ENCODE measurements at regions of chr10 and their contacts with region 1.

Region 1: GRCh38 chr10:31723106-31723750 is 205.4 kb downstream of the ARHGAP12 start:
- DNase-seq: no peak
- ATAC-seq: no peak
- H3K4me3 ChIP-seq: no peak overlapping the region
- H3K4me3 Mint-ChIP-seq: no peak overlapping the region
- H3K27ac ChIP-seq: no peak overlapping the region
- H3K27ac Mint-ChIP-seq: no peak overlapping the region
- H3K4me1 ChIP-seq: no peaks in the 10 kb centered on the region
- H3K4me1 Mint-ChIP-seq: no peaks in the 10 kb centered on the region
- H3K27me3 ChIP-seq: peaks cover 0 to 6% of the 10 kb centered on the region in 2 experiments
- H3K27me3 Mint-ChIP-seq: peaks cover 5 to 11% of the 10 kb centered on the region in 2 donors

Region 2: DNA sequence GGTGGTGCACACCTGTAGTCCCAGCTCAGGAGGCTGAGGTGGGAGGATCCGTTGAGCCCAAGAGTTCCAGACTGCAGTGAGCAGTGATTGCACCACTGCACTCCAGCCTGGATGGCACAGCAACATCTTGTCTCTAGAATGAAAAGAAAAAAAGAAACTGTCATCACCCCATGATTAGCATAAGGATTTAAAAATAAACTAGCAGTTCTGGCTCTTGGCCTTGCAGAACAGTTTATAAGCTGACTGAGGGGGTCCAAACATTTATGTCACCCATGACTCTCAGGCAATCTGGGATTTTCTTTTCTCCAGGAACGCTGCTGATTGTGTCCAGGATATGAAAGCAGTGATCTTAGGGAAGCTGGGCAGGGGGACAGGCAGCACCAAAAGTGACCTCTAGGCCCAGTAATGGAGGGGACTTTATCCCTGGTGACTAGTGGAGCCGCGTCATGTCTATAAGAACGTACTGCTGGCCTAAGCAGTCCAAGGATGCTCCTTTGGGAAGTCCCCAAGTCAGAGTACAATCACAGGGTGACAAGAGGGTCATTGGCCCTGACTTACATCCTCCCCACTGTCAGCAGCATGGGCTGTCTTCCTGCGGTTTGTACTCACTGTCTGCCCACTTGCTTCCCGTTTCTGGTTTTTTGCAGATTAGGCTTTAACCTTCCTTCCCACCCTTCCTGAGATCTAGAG is 28.0 kb after region 1 on chr10:
- CTCF ChIA-PET with region 1: no interaction called
- POLR2A ChIA-PET with region 1: interaction called in 1 of 2 experiments, 11 read pairs
- DNase-seq: peak in 1 of 35 experiments; percentile 14
- ATAC-seq: no peak
- H3K4me3 ChIP-seq: no peak overlapping the region
- H3K4me3 Mint-ChIP-seq: no peak overlapping the region
- H3K27ac ChIP-seq: no peak overlapping the region
- H3K27ac Mint-ChIP-seq: no peak overlapping the region
- H3K4me1 ChIP-seq: no peaks in the 10 kb centered on the region
- H3K4me1 Mint-ChIP-seq: no peaks in the 10 kb centered on the region
- H3K27me3 ChIP-seq: no peaks in the 10 kb centered on the region
- H3K27me3 Mint-ChIP-seq: no peaks in the 10 kb centered on the region

Region 3: GRCh38 chr10:31830887-31831286 is 107.7 kb after region 1 on chr10:
- CTCF ChIA-PET with region 1: no interaction called
- POLR2A ChIA-PET with region 1: no interaction called
- DNase-seq: no peak
- ATAC-seq: no peak
- H3K4me3 ChIP-seq: no peak overlapping the region
- H3K4me3 Mint-ChIP-seq: no peak overlapping the region
- H3K27ac ChIP-seq: no peak overlapping the region
- H3K27ac Mint-ChIP-seq: no peak overlapping the region
- H3K4me1 ChIP-seq: peaks cover 0 to 6% of the 10 kb centered on the region in 2 experiments
- H3K4me1 Mint-ChIP-seq: peaks cover 8 to 15% (median 13%) of the 10 kb centered on the region in 3 donors
- H3K27me3 ChIP-seq: no peaks in the 10 kb centered on the region
- H3K27me3 Mint-ChIP-seq: no peaks in the 10 kb centered on the region